Right cardiac atrium (tissue), 5 donors: ENCODE measurements at regions of chr5 and their contacts with region 1.

Region 1: DNA sequence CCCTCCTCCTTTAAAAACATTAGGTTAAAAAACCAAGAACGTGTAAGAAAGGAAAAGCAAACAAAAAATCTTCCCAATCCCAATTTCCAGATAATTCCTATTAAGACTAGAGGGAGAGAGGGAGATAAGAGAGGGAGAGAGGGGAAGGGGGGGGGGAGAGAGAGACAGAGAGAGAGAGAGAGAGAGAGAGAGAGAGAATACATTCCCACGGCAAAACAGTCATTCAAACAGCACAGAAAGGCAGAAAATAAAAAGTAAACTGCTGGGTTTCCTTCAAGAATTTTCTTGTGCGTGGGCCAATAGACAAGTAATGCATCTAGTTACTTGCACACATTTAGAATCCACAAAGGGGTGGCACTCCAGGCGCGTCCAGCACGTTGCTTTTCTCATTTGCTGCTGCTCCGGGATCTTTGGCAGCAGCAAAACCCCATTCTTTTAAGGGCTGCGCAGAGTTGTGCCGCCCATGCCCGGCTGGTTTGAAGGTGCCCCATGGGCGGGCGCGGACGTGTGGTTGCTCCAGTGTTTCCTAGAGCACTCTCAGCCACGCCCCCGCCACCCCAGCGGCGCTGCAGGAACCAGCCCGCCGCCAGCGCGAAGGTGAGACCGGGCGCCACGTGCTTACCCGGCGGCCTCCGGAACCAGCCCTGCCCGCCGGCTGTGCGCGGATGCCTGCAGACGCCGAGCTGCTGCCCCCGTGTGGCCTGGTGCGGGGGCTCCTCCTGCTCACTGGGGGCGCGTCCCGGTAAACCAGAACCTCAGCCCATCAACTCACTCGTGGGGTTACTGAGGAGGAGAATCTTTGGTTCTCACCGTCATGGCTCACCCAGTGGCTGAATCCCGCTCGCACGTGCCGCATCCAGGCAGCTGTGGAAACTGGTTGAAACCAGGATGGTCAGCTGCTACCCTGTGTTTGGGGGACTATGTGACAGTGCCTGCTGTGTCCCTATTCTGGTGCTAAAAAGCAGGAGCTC is 44.6 kb downstream of the STC2 start:
- DNase-seq: peak; percentile 81 to 93 (median 92)
- ATAC-seq: peak; percentile 89 to 90
- H3K4me3 ChIP-seq: peak overlapping the region; percentile 8
- H3K27ac ChIP-seq: peak overlapping the region; percentile 7
- H3K4me1 ChIP-seq: no peaks in the 10 kb centered on the region
- H3K27me3 ChIP-seq: no peaks in the 10 kb centered on the region

Region 2: GRCh38 chr5:172707285-172708182 is 576.1 kb before region 1 on chr5:
- intact Hi-C with region 1: loop called in 1 of 4 experiments (anchors 10 kb)
- DNase-seq: peak; percentile 55 to 76 (median 68)
- ATAC-seq: peak; percentile 67 to 74
- H3K4me3 ChIP-seq: no peak overlapping the region
- H3K27ac ChIP-seq: no peak overlapping the region
- H3K4me1 ChIP-seq: no peaks in the 10 kb centered on the region
- H3K27me3 ChIP-seq: no peaks in the 10 kb centered on the region

Region 3: GRCh38 chr5:172973127-172973916 is 310.3 kb before region 1 on chr5:
- intact Hi-C with region 1: loop called in 1 of 4 experiments (anchors 10 kb)
- DNase-seq: no peak
- ATAC-seq: peak; percentile 65 to 91
- H3K4me3 ChIP-seq: no peak overlapping the region
- H3K27ac ChIP-seq: no peak overlapping the region
- H3K4me1 ChIP-seq: no peaks in the 10 kb centered on the region
- H3K27me3 ChIP-seq: no peaks in the 10 kb centered on the region

Region 4: GRCh38 chr5:172984243-172984953 is 299.2 kb before region 1 on chr5:
- intact Hi-C with region 1: loop called in 2 of 4 experiments (anchors 10 kb)
- DNase-seq: peak; percentile 71 to 86 (median 75)
- ATAC-seq: peak; percentile 61 to 77
- H3K4me3 ChIP-seq: peak overlapping the region; percentile 95
- H3K27ac ChIP-seq: peak overlapping the region; percentile 98
- H3K4me1 ChIP-seq: peaks cover 2% of the 10 kb centered on the region
- H3K27me3 ChIP-seq: no peaks in the 10 kb centered on the region

Region 5: DNA sequence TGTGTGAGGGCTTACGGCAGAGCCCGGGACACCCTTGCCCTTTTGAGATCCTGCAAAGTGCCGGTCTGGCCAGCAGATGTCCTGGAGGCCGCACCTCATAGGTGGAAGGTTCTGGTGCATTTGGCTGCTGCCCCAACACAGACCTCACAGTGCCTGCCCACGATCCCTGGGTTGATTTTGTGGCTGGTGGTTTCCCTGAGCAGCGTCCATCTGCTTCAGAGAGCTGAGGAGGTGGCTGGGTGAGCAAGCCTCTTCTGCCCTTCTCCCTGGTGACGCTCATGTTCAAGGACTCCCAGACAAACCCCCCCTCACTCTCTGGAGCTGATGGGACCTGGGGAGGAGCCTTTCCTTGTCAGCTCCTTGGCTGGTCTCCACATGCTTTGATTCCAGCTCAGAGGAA is 120.4 kb before region 1 on chr5:
- intact Hi-C with region 1: loop called (anchors 2 to 10 kb)
- DNase-seq: peak in 1 of 3 donors; percentile 63
- ATAC-seq: peak; percentile 32 to 52
- H3K4me3 ChIP-seq: no peak overlapping the region
- H3K27ac ChIP-seq: peak overlapping the region; percentile 65
- H3K4me1 ChIP-seq: peaks cover 4% of the 10 kb centered on the region
- H3K27me3 ChIP-seq: no peaks in the 10 kb centered on the region